ENCODE measurements at regions of chr7 and their contacts with region 1.

Region 1: GRCh38 chr7:114799628-114800028 is 122.3 kb upstream of the MDFIC start:
- DNase-seq: peak; percentile 22
- H3K4me3 Mint-ChIP-seq: no peak overlapping the region
- H3K27ac Mint-ChIP-seq: peak overlapping the region; percentile 77
- H3K4me1 Mint-ChIP-seq: peaks cover 56% of the 10 kb centered on the region
- H3K27me3 Mint-ChIP-seq: peaks cover 2% of the 10 kb centered on the region

Region 2: DNA sequence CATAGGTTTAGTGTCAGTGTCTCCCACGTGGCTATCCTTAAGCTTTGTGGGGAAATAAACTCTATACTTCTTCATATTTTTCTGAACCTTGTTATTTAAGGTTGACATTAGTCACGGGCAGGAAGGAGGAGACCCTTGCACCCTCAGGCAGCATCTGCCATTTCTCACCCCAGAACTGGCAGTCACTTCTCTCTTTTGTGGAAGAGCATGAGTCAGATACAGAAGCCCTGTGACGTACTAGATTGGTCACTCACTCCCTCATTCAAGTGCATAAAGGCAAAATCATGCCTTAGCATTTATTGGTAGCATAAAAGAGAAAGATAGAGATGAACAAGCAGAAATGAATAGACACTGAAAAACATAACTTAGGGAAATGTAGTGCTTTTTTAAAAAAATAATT is 83.7 kb before region 1 on chr7:
- CTCF ChIA-PET with region 1: no interaction called
- POLR2A ChIA-PET with region 1: interaction called, 3 read pairs
- intact Hi-C with region 1: loop called (anchors 1 kb)
- DNase-seq: peak; percentile 35
- H3K4me3 Mint-ChIP-seq: no peak overlapping the region
- H3K27ac Mint-ChIP-seq: no peak overlapping the region
- H3K4me1 Mint-ChIP-seq: peaks cover 12% of the 10 kb centered on the region
- H3K27me3 Mint-ChIP-seq: peaks cover 12% of the 10 kb centered on the region

Region 3: DNA sequence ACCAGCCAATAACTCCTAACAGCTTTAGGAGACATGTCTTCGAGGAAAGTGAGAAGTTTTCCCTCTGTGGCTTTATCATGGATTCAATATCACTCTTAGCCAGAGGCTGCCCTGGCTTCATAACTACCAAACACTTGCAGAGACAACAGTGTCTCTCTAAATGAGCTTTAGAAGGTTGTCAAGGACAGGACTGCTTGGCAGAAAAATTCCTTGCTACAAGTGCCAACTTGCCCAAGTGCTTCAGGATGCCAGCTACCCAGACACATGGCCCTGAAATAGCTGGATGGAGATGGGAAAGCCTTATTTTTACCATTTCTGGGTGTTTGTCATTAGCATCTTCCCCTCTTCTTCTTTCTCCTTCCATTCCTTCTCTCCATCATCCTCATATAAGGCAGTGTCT is 14.9 kb before region 1 on chr7:
- CTCF ChIA-PET with region 1: interaction called, 4 read pairs
- POLR2A ChIA-PET with region 1: interaction called, 7 read pairs
- intact Hi-C with region 1: loop called (anchors 1 kb)
- DNase-seq: no peak
- H3K4me3 Mint-ChIP-seq: no peak overlapping the region
- H3K27ac Mint-ChIP-seq: peak overlapping the region; percentile 56
- H3K4me1 Mint-ChIP-seq: peaks cover 41% of the 10 kb centered on the region
- H3K27me3 Mint-ChIP-seq: peaks cover 3% of the 10 kb centered on the region

Region 4: DNA sequence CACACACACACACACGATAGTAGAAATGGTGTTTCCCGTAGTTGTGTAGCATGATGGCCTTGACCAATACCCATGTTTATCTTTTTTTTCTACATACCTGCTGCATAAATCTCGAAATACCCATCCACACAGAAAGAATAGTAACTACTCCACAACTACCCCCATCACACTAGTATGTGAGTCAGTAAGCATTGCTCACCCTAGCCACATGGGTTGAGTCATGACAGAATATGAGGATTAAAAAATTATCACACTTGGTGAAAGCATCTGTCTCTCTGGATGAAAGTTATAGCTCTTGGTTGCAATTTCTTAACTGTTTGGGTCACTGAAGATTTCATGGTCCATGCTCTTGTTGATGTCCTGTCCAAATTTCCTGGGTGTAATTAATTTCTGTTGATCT is 18.9 kb after region 1 on chr7:
- CTCF ChIA-PET with region 1: interaction called, 5 read pairs
- POLR2A ChIA-PET with region 1: interaction called, 4 read pairs
- intact Hi-C with region 1: loop called (anchors 1 kb)
- DNase-seq: peak; percentile 32
- H3K4me3 Mint-ChIP-seq: no peak overlapping the region
- H3K27ac Mint-ChIP-seq: peak overlapping the region; percentile 4
- H3K4me1 Mint-ChIP-seq: peaks cover 37% of the 10 kb centered on the region
- H3K27me3 Mint-ChIP-seq: no peaks in the 10 kb centered on the region

Region 5: GRCh38 chr7:114825423-114825951 is 25.9 kb after region 1 on chr7:
- CTCF ChIA-PET with region 1: interaction called, 3 read pairs
- POLR2A ChIA-PET with region 1: interaction called, 6 read pairs
- intact Hi-C with region 1: loop called (anchors 1 kb)
- DNase-seq: peak; percentile 81
- H3K4me3 Mint-ChIP-seq: no peak overlapping the region
- H3K27ac Mint-ChIP-seq: peak overlapping the region; percentile 87
- H3K4me1 Mint-ChIP-seq: peaks cover 31% of the 10 kb centered on the region
- H3K27me3 Mint-ChIP-seq: no peaks in the 10 kb centered on the region

Region 6: GRCh38 chr7:114901781-114902180 is 102.2 kb after region 1 on chr7:
- CTCF ChIA-PET with region 1: no interaction called
- POLR2A ChIA-PET with region 1: no interaction called
- intact Hi-C with region 1: no loop called
- DNase-seq: no peak
- H3K4me3 Mint-ChIP-seq: no peak overlapping the region
- H3K27ac Mint-ChIP-seq: no peak overlapping the region
- H3K4me1 Mint-ChIP-seq: no peaks in the 10 kb centered on the region
- H3K27me3 Mint-ChIP-seq: no peaks in the 10 kb centered on the region

Region 7: DNA sequence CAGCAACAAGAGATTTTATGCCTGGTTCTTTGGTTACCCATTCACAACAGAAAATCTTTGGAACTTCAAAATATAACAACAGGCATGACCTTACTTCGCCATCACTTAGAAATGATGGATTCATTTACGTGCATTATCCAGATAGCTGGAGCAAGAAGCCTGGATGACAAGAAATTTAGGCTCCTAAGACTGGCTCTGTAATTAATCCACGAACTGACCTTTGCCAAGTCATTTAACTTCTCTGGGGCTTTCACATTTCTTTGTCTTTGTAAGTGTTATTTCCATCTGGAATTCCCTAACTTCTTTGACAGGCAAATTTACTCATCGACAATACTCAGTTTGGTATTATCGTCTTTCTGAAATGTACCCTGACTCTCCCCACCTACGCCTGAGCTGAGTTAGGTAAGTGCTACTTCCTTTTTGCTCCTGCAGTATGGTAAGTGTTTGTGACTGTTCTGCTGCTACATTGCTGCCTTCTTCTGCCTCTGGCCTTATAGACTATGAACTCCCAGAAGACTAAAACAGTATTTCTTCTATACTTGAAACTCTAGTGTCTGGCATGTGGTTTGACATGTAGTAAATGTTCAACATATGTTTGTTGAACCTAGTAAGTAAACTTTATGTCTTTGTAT is 116.7 kb after region 1 on chr7:
- CTCF ChIA-PET with region 1: no interaction called
- POLR2A ChIA-PET with region 1: no interaction called
- intact Hi-C with region 1: loop called (anchors 1 kb)
- DNase-seq: peak; percentile 69
- H3K4me3 Mint-ChIP-seq: peak overlapping the region; percentile 38
- H3K27ac Mint-ChIP-seq: peak overlapping the region; percentile 90
- H3K4me1 Mint-ChIP-seq: peaks cover 57% of the 10 kb centered on the region
- H3K27me3 Mint-ChIP-seq: no peaks in the 10 kb centered on the region

Region 8: GRCh38 chr7:114930829-114931655 is 131.4 kb after region 1 on chr7:
- CTCF ChIA-PET with region 1: no interaction called
- POLR2A ChIA-PET with region 1: interaction called, 3 read pairs
- intact Hi-C with region 1: loop called (anchors 1 kb)
- DNase-seq: no peak
- H3K4me3 Mint-ChIP-seq: peak overlapping the region; percentile 67
- H3K27ac Mint-ChIP-seq: no peak overlapping the region
- H3K4me1 Mint-ChIP-seq: peaks cover 38% of the 10 kb centered on the region
- H3K27me3 Mint-ChIP-seq: no peaks in the 10 kb centered on the region

Region 9: GRCh38 chr7:115116773-115117715 is 317.4 kb after region 1 on chr7:
- CTCF ChIA-PET with region 1: no interaction called
- POLR2A ChIA-PET with region 1: no interaction called
- intact Hi-C with region 1: no loop called
- DNase-seq: no peak
- H3K4me3 Mint-ChIP-seq: no peak overlapping the region
- H3K27ac Mint-ChIP-seq: no peak overlapping the region
- H3K4me1 Mint-ChIP-seq: peaks cover 4% of the 10 kb centered on the region
- H3K27me3 Mint-ChIP-seq: no peaks in the 10 kb centered on the region

Measured in activated CD4-positive, alpha-beta memory T cell treated with anti-CD3 and anti-CD28 coated beads for 36 hours (primary cell).